Right lobe of liver (tissue), 6 donors: ENCODE measurements at regions of chr11 and their contacts with region 1.

Region 1: DNA sequence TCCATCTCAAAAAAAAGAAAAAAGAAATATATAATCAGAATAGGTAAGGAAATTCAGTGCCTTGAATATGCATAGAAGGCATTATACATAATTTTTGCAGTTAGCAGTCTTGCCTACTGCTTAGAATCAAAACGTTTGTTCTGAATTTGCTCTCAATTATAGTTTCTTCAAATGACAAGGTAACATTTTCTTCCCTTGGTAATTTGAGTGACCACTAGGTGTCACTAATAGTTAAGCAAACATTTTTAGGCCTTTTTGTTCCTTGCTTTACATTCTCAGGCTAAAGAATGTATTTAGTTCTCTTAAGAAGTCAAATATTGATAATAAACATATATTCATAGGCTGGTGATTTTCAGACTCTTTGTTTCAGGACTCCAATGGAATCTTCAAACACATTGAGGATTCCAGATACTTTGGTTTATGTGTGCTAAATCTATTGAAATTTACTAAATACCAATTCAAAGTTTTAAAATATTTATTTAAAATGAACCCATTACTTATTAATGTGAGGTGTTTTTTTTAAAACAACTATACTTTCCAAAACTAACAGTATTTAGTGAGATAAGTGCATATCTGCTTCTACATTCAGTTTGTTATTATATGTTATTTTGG is 55.0 kb upstream of the DEPDC7 start:
- DNase-seq: no peak
- ATAC-seq: peak; percentile 56 to 76 (median 74)
- H3K4me3 ChIP-seq: no peak overlapping the region
- H3K27ac ChIP-seq: no peak overlapping the region
- H3K4me1 ChIP-seq: no peaks in the 10 kb centered on the region
- H3K27me3 ChIP-seq: no peaks in the 10 kb centered on the region
- CTCF ChIP-seq: peak; percentile 67 to 77 (median 76)
- POLR2A ChIP-seq: no peak

Region 2: DNA sequence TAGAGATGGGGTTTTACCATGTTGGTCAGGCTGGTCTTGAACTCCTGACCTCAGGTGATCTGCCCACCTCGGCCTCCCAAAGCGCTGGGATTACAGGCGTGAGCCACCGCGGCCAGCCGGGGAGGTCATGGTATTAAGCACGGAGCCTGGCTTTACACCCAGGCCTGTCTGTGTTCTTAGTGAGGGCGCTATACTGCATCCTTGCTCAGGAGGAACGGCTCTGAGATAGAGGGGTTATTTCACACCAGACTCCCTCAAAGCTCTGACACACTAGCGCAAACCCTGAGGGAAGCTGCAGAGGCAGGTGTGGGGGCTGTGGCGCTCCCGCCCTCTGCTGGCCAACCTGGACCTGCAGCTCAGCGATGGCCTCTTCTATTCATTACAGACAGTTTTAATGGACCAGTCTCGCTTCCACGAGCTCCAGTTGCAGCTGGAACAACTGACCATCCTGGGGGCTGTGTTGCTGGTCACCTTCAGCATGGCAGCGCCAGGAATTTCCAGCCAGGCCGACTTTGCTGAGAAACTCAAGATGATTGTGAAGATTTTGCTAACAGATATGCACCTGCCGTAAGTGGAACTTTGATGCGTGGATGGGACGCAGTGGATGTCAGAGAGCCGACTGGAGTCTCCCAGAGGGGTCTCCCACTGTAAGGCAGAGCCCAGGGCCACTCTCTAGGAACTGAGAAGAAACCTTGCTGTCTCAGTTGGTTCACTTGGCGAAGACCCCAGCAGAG is 105.0 kb after region 1 on chr11:
- intact Hi-C with region 1: loop called (anchors 5 to 10 kb)
- DNase-seq: peak; percentile 75 to 83 (median 80)
- ATAC-seq: peak; percentile 82 to 93 (median 87)
- H3K4me3 ChIP-seq: no peak overlapping the region
- H3K27ac ChIP-seq: no peak overlapping the region
- H3K4me1 ChIP-seq: peaks cover 0 to 25% (median 9%) of the 10 kb centered on the region in 4 donors
- H3K27me3 ChIP-seq: no peaks in the 10 kb centered on the region
- CTCF ChIP-seq: peak; percentile 90 to 97 (median 94)
- POLR2A ChIP-seq: no peak